ENCODE measurements at regions of chr2 and their contacts with region 1.

Region 1: DNA sequence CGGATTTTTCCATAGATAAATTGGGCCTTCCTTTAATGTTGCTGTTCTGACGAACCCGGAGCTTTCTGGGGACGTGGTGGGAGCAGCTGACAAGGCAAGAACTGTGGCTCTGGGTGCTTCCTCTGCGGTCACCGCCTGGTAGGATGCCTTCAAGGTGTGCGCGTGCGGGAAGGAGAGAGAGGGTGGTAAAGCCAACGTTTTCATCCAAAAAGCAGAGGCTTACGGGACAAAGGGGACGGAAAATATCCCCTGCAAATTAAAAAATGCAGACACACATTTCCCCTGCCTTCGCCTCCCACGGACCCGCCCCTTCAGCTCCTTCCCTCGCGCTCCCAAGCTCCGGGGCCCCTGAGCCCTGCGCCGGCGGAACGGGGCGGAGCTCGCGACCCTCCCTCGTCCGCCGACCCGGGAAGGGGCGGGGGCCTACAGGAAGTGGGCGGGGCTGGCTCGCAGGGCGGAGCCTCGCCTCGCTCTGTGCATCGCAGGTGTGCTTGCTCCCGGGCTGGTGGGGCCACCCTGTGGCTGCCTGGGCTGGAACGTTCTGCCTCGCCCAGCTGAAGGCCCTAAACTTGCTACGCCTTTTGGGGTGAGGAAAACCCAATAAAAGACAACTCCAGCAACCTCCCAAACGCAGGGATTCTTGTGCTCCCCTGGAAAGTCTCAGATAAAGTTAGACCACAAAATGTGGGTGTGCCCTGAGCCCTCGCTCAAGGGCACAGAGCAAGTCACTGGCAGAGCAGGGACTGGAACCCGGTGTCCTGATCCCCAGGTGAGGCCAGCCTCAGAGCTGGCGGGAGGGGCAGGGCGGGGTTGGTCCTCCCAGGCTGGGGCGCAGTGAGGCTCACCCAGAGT is 25.4 kb upstream of the SLC66A3 start:
- DNase-seq: peak in 3 of 5 donors; percentile 54 to 81 (median 60)
- ATAC-seq: peak in 3 of 4 donors; percentile 29 to 39 (median 37)
- H3K4me3 ChIP-seq: peak overlapping the region in 11 of 12 donors; percentile 1 to 53 (median 43)
- H3K27ac ChIP-seq: peak overlapping the region in 5 of 12 donors; percentile 1 to 66 (median 38)
- H3K4me1 ChIP-seq: peaks cover 0 to 37% (median 20%) of the 10 kb centered on the region in 12 donors
- H3K27me3 ChIP-seq: peaks cover 0 to 3% (median 0%) of the 10 kb centered on the region in 9 donors
- CTCF ChIP-seq: peak in 7 of 12 donors; percentile 10 to 36 (median 18)
- POLR2A ChIP-seq: no peak

Region 2: DNA sequence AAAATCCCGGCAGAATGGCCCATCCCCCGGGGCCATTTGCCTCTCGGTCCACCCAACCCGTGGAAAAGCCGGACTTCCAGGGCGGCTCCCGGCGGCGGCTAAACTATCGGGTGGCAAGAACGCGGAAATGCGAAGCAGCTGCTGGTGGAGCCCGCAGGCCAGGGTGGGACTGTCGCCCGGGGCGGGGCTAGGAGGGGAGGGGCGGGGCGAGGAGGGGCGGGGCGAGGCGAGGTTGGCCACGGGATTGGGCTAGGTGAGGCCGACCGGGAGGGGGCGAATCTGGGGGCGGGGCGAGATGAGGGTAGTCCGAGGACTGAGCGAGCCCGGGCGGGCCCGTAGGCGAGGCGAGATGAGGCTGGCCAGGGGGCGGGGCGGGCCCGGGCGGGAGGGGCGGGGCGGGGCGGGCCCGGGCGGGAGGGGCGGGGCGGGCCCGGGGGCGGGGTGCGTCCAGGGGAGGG is 25.1 kb after region 1 on chr2:
- intact Hi-C with region 1: loop called in 1 of 10 experiments (anchors 2 kb)
- DNase-seq: peak; percentile 98 to 99 (median 99)
- ATAC-seq: peak; percentile 93 to 97 (median 96)
- H3K4me3 ChIP-seq: peak overlapping the region; percentile 20 to 98 (median 87)
- H3K27ac ChIP-seq: peak overlapping the region; percentile 66 to 97 (median 94)
- H3K4me1 ChIP-seq: peaks cover 0 to 27% (median 15%) of the 10 kb centered on the region in 12 donors
- H3K27me3 ChIP-seq: no peaks in the 10 kb centered on the region
- CTCF ChIP-seq: no peak
- POLR2A ChIP-seq: no peak

Region 3: DNA sequence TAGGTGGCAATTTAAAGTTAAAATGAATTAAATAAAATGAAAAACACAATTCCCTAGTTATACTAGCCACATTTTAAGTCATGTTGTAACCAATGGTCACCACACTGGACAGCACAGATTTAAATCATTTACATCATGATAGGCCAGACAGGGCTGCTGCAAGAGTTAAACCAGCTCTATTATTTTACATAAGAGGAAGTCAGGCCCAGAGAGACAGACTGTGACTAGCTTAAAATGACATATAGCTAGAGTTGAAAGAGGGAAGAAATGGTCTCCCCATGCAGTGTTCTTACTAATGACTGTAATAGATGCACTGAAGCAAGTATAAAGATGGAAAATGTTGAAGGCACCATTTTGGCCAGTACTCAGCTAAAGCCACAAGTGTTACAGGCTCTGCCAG is 95.1 kb after region 1 on chr2:
- intact Hi-C with region 1: loop called in 1 of 10 experiments (anchors 10 kb)
- DNase-seq: no peak
- ATAC-seq: no peak
- H3K4me3 ChIP-seq: no peak overlapping the region
- H3K27ac ChIP-seq: no peak overlapping the region
- H3K4me1 ChIP-seq: peaks cover 0 to 8% (median 0%) of the 10 kb centered on the region in 12 donors
- H3K27me3 ChIP-seq: no peaks in the 10 kb centered on the region
- CTCF ChIP-seq: no peak
- POLR2A ChIP-seq: no peak

Region 4: DNA sequence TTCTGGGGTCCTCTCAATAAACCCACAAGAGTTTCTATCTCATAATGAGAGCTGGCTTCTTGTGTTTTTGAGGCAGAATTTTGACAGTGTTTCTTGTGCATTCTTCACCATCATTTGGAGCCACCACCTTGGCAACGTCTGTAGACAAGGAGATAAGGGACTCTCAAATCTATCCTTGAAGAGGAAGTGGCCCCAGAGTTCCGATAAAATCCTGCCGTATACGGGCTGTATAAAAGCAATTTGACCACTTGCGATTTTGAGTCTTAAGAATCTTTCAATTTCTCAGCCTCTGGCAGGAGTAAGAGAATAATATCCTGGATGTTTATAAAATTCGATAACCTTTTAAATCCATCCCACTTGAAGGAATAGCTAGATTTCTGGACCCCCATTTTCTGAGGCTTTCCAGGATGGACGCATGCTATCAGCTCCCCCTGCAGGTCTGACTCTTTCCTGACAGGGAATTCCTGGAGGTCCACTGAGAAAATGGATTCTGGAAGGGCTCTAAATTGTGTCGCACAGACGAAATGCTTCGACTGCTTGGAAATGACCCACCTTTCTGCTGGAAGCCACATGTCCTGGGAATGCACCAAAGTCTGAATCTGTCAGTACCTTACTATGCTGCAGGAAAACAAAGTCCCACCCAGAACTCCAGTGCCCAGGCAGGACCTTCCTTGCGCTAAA is 282.1 kb after region 1 on chr2:
- intact Hi-C with region 1: loop called in 9 of 10 experiments (anchors 2 to 10 kb)
- DNase-seq: peak in 3 of 5 donors; percentile 61 to 73 (median 67)
- ATAC-seq: peak; percentile 54 to 81 (median 70)
- H3K4me3 ChIP-seq: peak overlapping the region in 11 of 12 donors; percentile 17 to 68 (median 46)
- H3K27ac ChIP-seq: peak overlapping the region in 2 of 12 donors; percentile 1 to 6
- H3K4me1 ChIP-seq: peaks cover 0 to 19% (median 8%) of the 10 kb centered on the region in 12 donors
- H3K27me3 ChIP-seq: no peaks in the 10 kb centered on the region
- CTCF ChIP-seq: peak; percentile 76 to 95 (median 86)
- POLR2A ChIP-seq: no peak

Region 5: GRCh38 chr2:11446733-11447248 is 317.0 kb after region 1 on chr2:
- intact Hi-C with region 1: loop called in 9 of 10 experiments (anchors 2 to 10 kb)
- DNase-seq: peak in 4 of 5 donors; percentile 36 to 44 (median 40)
- ATAC-seq: peak; percentile 47 to 84 (median 77)
- H3K4me3 ChIP-seq: no peak overlapping the region
- H3K27ac ChIP-seq: no peak overlapping the region
- H3K4me1 ChIP-seq: no peaks in the 10 kb centered on the region
- H3K27me3 ChIP-seq: no peaks in the 10 kb centered on the region
- CTCF ChIP-seq: peak; percentile 68 to 89 (median 82)
- POLR2A ChIP-seq: no peak

Region 6: DNA sequence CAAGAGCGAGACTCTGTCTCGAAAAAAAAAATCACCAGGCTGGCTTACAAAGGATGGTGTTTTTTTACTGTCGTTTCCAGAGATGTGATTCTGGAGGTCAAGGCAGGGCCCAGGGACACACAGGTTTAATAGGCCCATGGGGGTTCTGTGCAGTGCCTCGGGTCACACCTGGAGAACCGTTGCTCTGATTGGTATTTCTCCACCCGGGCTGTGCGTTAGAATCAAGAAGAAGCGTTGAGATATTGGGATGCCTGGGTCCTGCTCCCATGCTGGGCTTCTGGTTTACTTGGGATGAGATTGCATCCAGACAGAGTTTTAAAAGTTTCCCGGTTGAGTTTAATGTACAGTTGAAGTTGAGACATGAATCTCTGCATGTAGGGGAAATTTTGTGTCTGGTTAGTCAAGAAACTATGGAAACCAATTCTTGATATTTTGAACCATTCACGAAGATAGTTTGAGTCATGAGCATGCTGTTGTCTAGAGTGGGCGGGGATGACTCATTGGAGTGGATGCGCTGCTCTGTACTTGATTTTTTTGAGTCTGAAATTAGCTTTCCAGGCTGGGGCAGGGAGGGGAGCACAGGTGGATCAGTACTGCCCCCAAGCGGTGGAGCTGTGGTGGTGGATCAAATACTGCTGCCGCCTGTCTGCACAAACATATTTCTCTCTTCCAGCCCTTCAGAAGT is 454.2 kb after region 1 on chr2:
- intact Hi-C with region 1: loop called in 7 of 10 experiments (anchors 5 to 10 kb)
- DNase-seq: peak in 4 of 5 donors; percentile 64 to 80 (median 74)
- ATAC-seq: peak; percentile 38 to 86 (median 74)
- H3K4me3 ChIP-seq: no peak overlapping the region
- H3K27ac ChIP-seq: peak overlapping the region in 7 of 12 donors; percentile 11 to 74 (median 34)
- H3K4me1 ChIP-seq: peaks cover 0 to 18% (median 6%) of the 10 kb centered on the region in 12 donors
- H3K27me3 ChIP-seq: no peaks in the 10 kb centered on the region
- CTCF ChIP-seq: peak; percentile 58 to 83 (median 76)
- POLR2A ChIP-seq: no peak

Region 7: GRCh38 chr2:11589316-11589940 is 459.6 kb after region 1 on chr2:
- intact Hi-C with region 1: loop called in 7 of 10 experiments (anchors 5 to 10 kb)
- DNase-seq: no peak
- ATAC-seq: no peak
- H3K4me3 ChIP-seq: no peak overlapping the region
- H3K27ac ChIP-seq: no peak overlapping the region
- H3K4me1 ChIP-seq: peaks cover 0 to 2% (median 0%) of the 10 kb centered on the region in 12 donors
- H3K27me3 ChIP-seq: no peaks in the 10 kb centered on the region
- CTCF ChIP-seq: no peak
- POLR2A ChIP-seq: no peak